CD8-positive, alpha-beta T cell (primary cell): ENCODE measurements at regions of chr12 and their contacts with region 1.

Region 1: DNA sequence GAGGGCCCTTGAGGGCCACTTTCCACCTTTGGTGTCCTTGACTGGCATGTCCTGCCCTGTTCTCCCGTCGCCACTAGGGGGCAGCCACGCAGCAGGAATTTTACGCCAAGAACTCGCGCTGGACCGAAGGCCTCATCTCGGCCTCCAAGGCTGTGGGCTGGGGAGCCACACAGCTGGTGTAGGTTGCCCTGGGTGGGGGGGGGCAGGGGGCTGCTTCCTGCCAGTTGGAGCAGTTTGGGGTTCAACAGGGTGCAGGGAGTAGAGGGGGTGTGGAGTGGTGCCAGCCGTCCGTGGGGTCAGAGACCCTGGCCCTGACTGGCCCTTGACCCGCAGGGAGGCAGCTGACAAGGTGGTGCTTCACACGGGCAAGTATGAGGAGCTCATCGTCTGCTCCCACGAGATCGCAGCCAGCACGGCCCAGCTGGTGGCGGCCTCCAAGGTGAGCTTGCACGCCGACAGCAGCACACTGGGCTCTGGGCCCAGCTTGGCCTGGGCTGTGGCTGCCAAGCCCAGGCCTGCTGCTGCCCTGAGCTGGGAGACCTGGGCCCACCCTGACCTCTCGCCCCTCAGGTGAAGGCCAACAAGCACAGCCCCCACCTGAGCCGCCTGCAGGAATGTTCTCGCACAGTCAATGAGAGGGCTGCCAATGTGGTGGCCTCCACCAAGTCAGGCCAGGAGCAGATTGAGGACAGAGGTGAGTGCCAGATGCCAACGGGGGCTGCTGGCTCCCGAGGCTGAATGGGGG is 25.3 kb downstream of the HIP1R start:
- DNase-seq: peak; percentile 65 to 92 (median 82)
- ATAC-seq: peak; percentile 61
- H3K4me3 ChIP-seq: no peak overlapping the region
- H3K4me3 Mint-ChIP-seq: no peak overlapping the region
- H3K27ac ChIP-seq: no peak overlapping the region
- H3K27ac Mint-ChIP-seq: peak overlapping the region; percentile 57
- H3K4me1 ChIP-seq: peaks cover 5% of the 10 kb centered on the region
- H3K4me1 Mint-ChIP-seq: peaks cover 3% of the 10 kb centered on the region
- H3K27me3 ChIP-seq: no peaks in the 10 kb centered on the region
- H3K27me3 Mint-ChIP-seq: no peaks in the 10 kb centered on the region
- CTCF ChIP-seq: peak; percentile 64

Region 2: DNA sequence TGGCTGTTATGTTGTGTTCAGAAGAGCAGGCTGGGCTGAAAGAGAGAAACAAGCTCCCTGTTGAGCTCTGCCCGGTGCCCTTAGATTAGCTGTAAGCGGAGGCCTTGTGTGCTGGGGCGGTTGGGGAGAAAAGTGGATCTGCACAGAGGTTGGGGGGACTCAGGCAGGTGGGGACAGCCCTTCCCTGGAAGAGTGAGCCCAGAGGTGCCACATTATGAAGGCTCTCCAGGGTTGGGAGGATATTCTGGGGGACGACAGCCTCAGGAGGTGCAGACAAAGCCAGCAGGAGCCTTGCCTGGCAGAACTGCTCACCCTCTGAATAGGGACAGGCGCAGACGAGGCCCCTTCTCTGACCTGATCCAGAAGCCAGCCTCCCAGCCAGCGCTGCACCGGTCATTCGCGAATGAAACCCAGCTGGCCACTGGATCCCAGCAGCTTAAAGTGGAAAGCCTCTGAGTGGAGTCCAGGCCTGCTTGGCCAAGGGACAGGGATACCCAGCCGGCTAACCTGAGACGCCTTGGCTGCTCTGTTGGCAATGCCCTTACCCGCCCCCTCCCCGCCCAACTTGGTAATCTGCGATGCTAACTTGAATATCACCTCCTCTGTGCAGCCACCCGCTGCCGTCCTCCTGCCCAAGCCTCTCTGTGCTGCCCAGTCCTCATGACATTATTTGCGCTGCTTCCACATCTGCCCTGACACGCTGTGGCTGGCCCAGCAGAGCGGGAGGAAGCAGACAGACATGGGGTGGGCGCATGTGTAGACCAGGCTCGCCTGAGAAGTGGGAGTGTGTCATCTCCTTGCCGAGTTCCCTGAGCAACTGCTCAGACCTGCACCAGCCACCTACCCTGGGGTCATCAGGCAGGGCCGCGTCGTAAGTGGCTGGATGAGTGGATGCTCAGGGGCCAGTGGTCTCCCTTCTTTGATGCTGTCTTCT is 19.7 kb before region 1 on chr12:
- CTCF ChIA-PET with region 1: interaction called, 13 read pairs
- POLR2A ChIA-PET with region 1: interaction called, 4 read pairs
- intact Hi-C with region 1: no loop called
- DNase-seq: no peak
- ATAC-seq: no peak
- H3K4me3 ChIP-seq: no peak overlapping the region
- H3K4me3 Mint-ChIP-seq: no peak overlapping the region
- H3K27ac ChIP-seq: no peak overlapping the region
- H3K27ac Mint-ChIP-seq: peak overlapping the region; percentile 41
- H3K4me1 ChIP-seq: peaks cover 14% of the 10 kb centered on the region
- H3K4me1 Mint-ChIP-seq: peaks cover 48% of the 10 kb centered on the region
- H3K27me3 ChIP-seq: no peaks in the 10 kb centered on the region
- H3K27me3 Mint-ChIP-seq: no peaks in the 10 kb centered on the region
- CTCF ChIP-seq: no peak

Region 3: GRCh38 chr12:122871851-122872780 is 11.6 kb after region 1 on chr12:
- CTCF ChIA-PET with region 1: interaction called, 40 read pairs
- POLR2A ChIA-PET with region 1: interaction called, 4 read pairs
- intact Hi-C with region 1: no loop called
- DNase-seq: peak in 4 of 9 experiments; percentile 36 to 65 (median 44)
- ATAC-seq: peak; percentile 43
- H3K4me3 ChIP-seq: peak overlapping the region; percentile 19 to 48
- H3K4me3 Mint-ChIP-seq: peak overlapping the region; percentile 85
- H3K27ac ChIP-seq: peak overlapping the region; percentile 3 to 78
- H3K27ac Mint-ChIP-seq: peak overlapping the region; percentile 86
- H3K4me1 ChIP-seq: peaks cover 62% of the 10 kb centered on the region
- H3K4me1 Mint-ChIP-seq: peaks cover 63% of the 10 kb centered on the region
- H3K27me3 ChIP-seq: no peaks in the 10 kb centered on the region
- H3K27me3 Mint-ChIP-seq: no peaks in the 10 kb centered on the region
- CTCF ChIP-seq: no peak

Region 4: DNA sequence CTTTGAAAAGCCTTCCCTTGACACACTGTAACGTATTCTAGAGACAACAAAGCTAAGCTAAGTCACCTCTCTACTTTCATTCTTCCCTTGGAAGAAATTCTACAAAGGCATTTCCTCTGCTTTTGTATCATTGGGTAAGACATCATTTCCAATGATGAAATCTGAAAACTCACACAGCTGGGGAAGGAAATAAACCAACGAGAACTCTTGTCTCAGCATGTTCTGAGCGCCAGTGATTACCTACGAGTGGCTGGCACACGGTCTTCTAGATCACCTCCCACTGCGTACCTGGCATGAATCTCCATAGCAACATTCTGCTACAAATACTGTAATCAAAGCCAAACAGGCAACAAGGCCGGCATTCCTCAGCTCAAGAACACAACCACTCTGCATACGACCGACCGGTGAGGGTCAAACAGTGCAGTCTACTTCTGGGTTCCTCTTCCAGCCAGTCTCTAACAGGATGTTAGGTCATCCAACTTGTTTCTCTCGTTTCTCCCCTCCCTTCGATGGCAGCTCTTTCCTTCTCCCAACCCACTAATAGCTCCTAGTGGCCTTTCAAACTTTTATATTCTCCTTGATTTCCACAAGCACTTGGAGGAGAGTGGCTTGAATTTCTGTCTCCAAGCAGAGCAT is 27.8 kb after region 1 on chr12:
- CTCF ChIA-PET with region 1: interaction called, 56 read pairs
- POLR2A ChIA-PET with region 1: no interaction called
- intact Hi-C with region 1: no loop called
- DNase-seq: peak in 6 of 9 experiments; percentile 42 to 89 (median 71)
- ATAC-seq: peak; percentile 88
- H3K4me3 ChIP-seq: peak overlapping the region in 1 of 2 experiments; percentile 26
- H3K4me3 Mint-ChIP-seq: peak overlapping the region; percentile 77
- H3K27ac ChIP-seq: peak overlapping the region; percentile 17 to 63
- H3K27ac Mint-ChIP-seq: peak overlapping the region; percentile 93
- H3K4me1 ChIP-seq: peaks cover 74% of the 10 kb centered on the region
- H3K4me1 Mint-ChIP-seq: peaks cover 87% of the 10 kb centered on the region
- H3K27me3 ChIP-seq: no peaks in the 10 kb centered on the region
- H3K27me3 Mint-ChIP-seq: no peaks in the 10 kb centered on the region
- CTCF ChIP-seq: no peak

Region 5: DNA sequence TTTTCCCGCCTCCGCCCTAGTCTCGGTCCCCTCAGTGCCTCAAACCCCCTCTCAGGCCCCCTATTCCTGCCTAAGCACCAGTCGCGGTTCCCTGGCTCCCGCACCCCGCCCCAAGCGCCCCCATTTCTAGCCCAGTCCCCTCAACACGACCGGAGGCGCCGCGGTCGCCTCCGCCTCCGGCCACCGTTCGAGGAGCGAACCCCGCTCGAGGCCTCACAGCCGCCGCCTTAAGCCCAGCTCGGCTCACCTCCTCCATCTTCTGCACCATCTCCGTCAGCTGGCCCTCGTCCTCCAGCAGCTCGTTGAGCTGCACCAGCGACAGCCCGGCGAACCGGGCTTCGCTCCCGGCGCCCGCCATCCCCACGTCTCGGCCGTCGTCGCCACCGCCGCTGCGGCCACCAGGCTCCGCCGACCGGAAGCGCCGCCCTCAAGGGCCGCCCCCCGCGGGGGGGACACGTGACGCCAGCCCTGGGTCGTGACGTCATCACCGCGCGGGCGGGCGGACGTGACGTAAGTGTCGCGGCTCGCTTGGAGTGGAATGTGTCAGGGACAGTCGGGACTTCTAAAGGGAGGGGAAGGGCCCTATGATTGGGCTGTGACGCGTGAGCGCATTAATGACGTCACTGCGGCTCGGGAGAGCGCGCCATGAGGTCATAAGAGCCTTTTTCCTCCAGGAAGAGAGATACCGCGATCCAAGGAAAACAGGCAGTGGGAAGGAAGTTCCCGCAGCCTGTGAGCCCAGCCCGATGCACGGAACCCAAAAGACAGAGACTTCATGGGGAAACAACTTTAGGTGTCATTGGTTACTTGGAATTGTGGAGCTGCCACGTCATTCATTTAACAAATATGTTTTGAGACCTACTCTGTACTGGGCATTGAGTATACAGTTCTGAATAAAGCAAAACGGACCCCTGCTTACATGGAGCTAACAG is 35.5 kb after region 1 on chr12 and contains the start of gene VPS37B:
- CTCF ChIA-PET with region 1: interaction called, 56 read pairs
- POLR2A ChIA-PET with region 1: interaction called, 3 read pairs
- intact Hi-C with region 1: loop called in 1 of 2 experiments (anchors 5 kb)
- DNase-seq: peak; percentile 79 to 96 (median 91)
- ATAC-seq: peak; percentile 63
- H3K4me3 ChIP-seq: peak within 1 kb of the TSS; percentile 80 to 93
- H3K4me3 Mint-ChIP-seq: peak within 1 kb of the TSS; percentile 91
- H3K27ac ChIP-seq: peak within 1 kb of the TSS; percentile 92 to 96
- H3K27ac Mint-ChIP-seq: peak within 1 kb of the TSS; percentile 99
- H3K4me1 ChIP-seq: peaks cover 82% of the 10 kb centered on the region
- H3K4me1 Mint-ChIP-seq: peaks cover 89% of the 10 kb centered on the region
- H3K27me3 ChIP-seq: no peaks in the 10 kb centered on the region
- H3K27me3 Mint-ChIP-seq: no peaks in the 10 kb centered on the region
- CTCF ChIP-seq: no peak
- total RNA-seq, gene VPS37B: 145 to 148 TPM

Region 6: DNA sequence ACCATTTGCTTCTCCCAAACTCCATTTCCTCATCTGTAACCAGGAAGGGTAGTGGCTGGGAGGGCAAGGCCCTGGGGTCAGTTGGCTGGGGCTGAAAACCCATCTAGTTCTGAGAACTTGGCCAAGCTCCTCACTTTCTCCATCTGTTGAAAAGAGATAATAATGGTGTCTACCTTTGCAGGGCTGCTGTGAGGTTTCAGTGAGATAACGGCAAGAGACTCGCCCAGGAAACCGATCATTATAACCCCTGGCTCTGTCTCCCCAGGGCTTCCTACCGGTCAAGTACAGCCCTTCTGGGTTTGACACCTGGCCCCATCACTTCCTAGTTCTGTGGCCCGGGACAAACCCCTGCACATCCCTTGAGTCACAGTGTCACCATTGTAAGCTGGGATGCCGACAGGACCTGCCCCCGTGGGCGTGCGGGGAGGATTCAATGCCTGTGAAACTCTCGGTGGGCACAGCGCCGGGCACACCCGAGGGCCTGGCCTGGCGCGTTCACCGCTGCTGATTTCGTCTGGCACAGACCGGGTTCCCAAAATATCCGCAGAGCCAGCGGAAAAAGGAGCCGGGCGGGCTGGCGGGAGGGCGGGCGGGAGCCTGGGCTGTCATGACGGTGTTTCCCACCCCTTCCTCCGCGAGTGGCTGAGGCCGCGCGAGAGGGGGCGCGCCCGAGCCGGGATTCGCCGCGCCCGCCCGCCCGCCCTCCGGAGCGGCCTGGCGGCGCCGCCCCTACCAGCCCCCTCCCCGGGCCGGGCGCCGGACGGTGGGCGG is 527.8 kb after region 1 on chr12:
- CTCF ChIA-PET with region 1: no interaction called
- POLR2A ChIA-PET with region 1: no interaction called
- intact Hi-C with region 1: no loop called
- DNase-seq: peak; percentile 41 to 88 (median 72)
- ATAC-seq: peak; percentile 66
- H3K4me3 ChIP-seq: peak overlapping the region; percentile 42 to 64
- H3K4me3 Mint-ChIP-seq: peak overlapping the region; percentile 88
- H3K27ac ChIP-seq: peak overlapping the region; percentile 33 to 79
- H3K27ac Mint-ChIP-seq: peak overlapping the region; percentile 91
- H3K4me1 ChIP-seq: peaks cover 22% of the 10 kb centered on the region
- H3K4me1 Mint-ChIP-seq: peaks cover 32% of the 10 kb centered on the region
- H3K27me3 ChIP-seq: no peaks in the 10 kb centered on the region
- H3K27me3 Mint-ChIP-seq: no peaks in the 10 kb centered on the region
- CTCF ChIP-seq: no peak

Region 7: GRCh38 chr12:124032265-124032886 is 1171.9 kb after region 1 on chr12:
- CTCF ChIA-PET with region 1: no interaction called
- POLR2A ChIA-PET with region 1: no interaction called
- intact Hi-C with region 1: no loop called
- DNase-seq: peak in 3 of 9 experiments; percentile 15 to 54 (median 43)
- ATAC-seq: no peak
- H3K4me3 ChIP-seq: no peak overlapping the region
- H3K4me3 Mint-ChIP-seq: no peak overlapping the region
- H3K27ac ChIP-seq: no peak overlapping the region
- H3K27ac Mint-ChIP-seq: no peak overlapping the region
- H3K4me1 ChIP-seq: no peaks in the 10 kb centered on the region
- H3K4me1 Mint-ChIP-seq: peaks cover 3% of the 10 kb centered on the region
- H3K27me3 ChIP-seq: no peaks in the 10 kb centered on the region
- H3K27me3 Mint-ChIP-seq: no peaks in the 10 kb centered on the region
- CTCF ChIP-seq: peak; percentile 37